ENCODE measurements at regions of chr1 and their contacts with region 1.

Region 1: GRCh38 chr1:32351399-32352238 is 10.7 kb downstream of the FAM229A start:
- DNase-seq: peak; percentile 98
- H3K4me3 ChIP-seq: peak overlapping the region; percentile 62 to 88 (median 74)
- H3K27ac ChIP-seq: peak overlapping the region; percentile 84 to 93 (median 90)
- H3K4me1 ChIP-seq: peaks cover 0 to 26% (median 19%) of the 10 kb centered on the region in 4 donors
- H3K27me3 ChIP-seq: no peaks in the 10 kb centered on the region
- CTCF ChIP-seq: no peak
- EP300 ChIP-seq: no peak
- POLR2A ChIP-seq: peak; percentile 50 to 53

Region 2: GRCh38 chr1:32221980-32222755 is 129.5 kb before region 1 on chr1 and contains the starts of genes EIF3I and TMEM234:
- intact Hi-C with region 1: loop called (anchors 5 kb)
- DNase-seq: peak; percentile 97
- H3K4me3 ChIP-seq: peak within 1 kb of the TSS; percentile 70 to 87 (median 73)
- H3K27ac ChIP-seq: peak within 1 kb of the TSS; percentile 88 to 91 (median 90)
- H3K4me1 ChIP-seq: peaks cover 0 to 32% (median 26%) of the 10 kb centered on the region in 4 donors
- H3K27me3 ChIP-seq: no peaks in the 10 kb centered on the region
- CTCF ChIP-seq: no peak
- EP300 ChIP-seq: peak in 1 of 4 donors; percentile 53
- POLR2A ChIP-seq: peak; percentile 61 to 71
- total RNA-seq, gene EIF3I: 163 to 178 (median 171) TPM
- total RNA-seq, gene TMEM234: 6.4 to 20.8 (median 10.1) TPM

Region 3: GRCh38 chr1:32335790-32336590 is 15.6 kb before region 1 on chr1 and contains the start of gene MARCKSL1:
- intact Hi-C with region 1: loop called (anchors 2 kb)
- DNase-seq: peak; percentile 91
- H3K4me3 ChIP-seq: peak within 1 kb of the TSS; percentile 38 to 73 (median 60)
- H3K27ac ChIP-seq: peak within 1 kb of the TSS; percentile 45 to 65 (median 54)
- H3K4me1 ChIP-seq: peaks cover 0 to 25% (median 22%) of the 10 kb centered on the region in 4 donors
- H3K27me3 ChIP-seq: no peaks in the 10 kb centered on the region
- CTCF ChIP-seq: no peak
- EP300 ChIP-seq: no peak
- POLR2A ChIP-seq: no peak
- total RNA-seq, gene MARCKSL1: 4.1 to 9.7 (median 6.6) TPM

Region 4: DNA sequence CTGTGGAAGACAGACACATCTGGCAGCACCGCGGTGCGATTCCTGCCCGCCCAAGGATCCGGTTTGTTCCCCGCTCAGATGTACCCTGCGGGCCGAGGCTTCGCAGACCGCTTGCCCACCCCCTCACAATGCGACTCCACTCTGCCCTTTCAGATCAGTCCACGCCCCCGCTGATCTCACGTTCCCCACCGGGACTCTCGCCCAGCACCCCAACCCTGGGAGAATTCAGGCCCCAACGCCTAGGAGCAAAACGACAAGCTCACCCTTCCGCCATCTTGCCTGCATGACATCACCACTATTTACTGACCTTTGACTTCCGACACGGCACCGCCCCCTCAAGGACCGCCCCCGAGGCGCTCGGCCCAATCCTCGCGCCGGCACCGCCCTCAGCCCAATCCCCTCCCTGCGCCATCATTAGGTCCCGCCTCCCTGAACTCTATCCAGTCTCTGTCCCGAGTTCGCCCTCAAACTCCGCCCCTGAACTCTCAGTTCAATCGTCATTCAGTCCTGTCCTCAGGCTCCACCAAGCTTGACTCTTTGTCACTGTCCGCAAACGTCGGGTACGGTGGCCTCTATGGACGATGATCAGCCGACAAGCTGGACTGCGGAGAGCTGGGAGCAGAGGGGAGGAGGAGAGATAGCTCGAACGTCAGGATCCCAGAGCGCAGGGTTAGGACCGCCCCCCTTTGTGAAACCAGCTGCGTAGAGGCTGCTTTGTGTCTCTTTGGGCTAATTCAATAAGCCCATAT is 42.7 kb after region 1 on chr1 and contains the start of gene BSDC1:
- intact Hi-C with region 1: loop called (anchors 5 kb)
- DNase-seq: peak; percentile 99
- H3K4me3 ChIP-seq: peak within 1 kb of the TSS; percentile 81 to 94 (median 88)
- H3K27ac ChIP-seq: peak within 1 kb of the TSS; percentile 92 to 95 (median 94)
- H3K4me1 ChIP-seq: peaks cover 0 to 42% (median 28%) of the 10 kb centered on the region in 4 donors
- H3K27me3 ChIP-seq: no peaks in the 10 kb centered on the region
- CTCF ChIP-seq: no peak
- EP300 ChIP-seq: no peak
- POLR2A ChIP-seq: peak; percentile 88 to 89
- total RNA-seq, gene BSDC1: 52.8 to 76.7 (median 62.1) TPM